CD4-positive, alpha-beta T cell (primary cell): ENCODE measurements at regions of chr19 and their contacts with region 1.

Region 1: DNA sequence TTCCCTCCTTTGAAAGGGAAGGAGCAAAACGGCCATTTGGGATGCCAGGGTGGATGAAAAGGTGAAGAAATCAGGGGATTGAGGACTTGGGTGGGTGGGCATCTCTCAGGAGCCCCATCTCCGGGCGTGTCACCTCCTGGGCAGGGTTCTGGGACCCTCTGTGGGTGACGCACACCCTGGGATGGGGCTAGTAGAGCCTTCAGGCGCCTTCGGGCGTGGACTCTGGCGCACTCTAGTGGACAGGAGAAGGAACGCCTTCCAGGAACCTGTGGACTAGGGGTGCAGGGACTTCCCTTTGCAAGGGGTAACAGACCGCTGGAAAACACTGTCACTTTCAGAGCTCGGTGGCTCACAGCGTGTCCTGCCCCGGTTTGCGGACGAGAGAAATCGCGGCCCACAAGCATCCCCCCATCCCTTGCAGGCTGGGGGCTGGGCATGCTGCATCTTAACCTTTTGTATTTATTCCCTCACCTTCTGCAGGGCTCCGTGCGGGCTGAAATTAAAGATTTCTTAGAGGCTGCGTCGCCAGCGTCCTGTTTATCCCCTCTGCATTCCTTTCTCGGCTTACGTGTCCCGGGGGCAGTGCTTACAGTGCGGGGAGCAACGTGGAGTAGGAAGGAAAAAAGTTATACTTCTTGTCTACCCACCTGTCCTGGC is 15.2 kb upstream of the S1PR4 start:
- DNase-seq: peak; percentile 60 to 87 (median 68)
- ATAC-seq: peak; percentile 94
- H3K4me3 ChIP-seq: no peak overlapping the region
- H3K4me3 Mint-ChIP-seq: no peak overlapping the region
- H3K27ac ChIP-seq: no peak overlapping the region
- H3K27ac Mint-ChIP-seq: peak overlapping the region; percentile 29
- H3K4me1 ChIP-seq: peaks cover 19% of the 10 kb centered on the region
- H3K4me1 Mint-ChIP-seq: peaks cover 13% of the 10 kb centered on the region
- H3K27me3 ChIP-seq: no peaks in the 10 kb centered on the region
- H3K27me3 Mint-ChIP-seq: no peaks in the 10 kb centered on the region
- CTCF ChIP-seq: peak; percentile 89

Region 2: DNA sequence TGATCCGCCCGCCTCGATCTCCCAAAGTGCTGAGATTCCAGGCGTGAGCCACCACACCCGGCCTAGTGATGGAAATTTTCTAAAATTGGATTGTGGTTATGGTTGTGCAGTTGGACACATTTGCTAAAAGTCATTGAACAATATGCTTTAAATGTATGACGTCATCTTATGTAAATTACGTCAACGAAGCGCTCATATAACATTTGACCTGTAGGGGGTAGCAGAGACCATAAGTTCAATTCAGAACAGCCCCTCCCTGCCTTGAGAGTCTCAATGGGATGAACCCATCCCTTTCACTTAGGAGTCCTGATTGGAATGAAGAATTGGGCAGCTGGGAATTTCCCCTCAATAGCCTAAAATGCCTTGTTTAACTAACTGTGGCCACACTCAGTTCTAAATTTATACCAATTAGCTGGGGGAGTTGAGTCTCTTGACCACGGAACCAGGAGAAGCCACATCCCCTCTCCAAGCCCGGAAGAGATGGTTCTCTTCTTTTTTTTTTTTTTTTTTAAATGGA is 201.3 kb before region 1 on chr19:
- CTCF ChIA-PET with region 1: no interaction called
- POLR2A ChIA-PET with region 1: interaction called, 3 read pairs
- intact Hi-C with region 1: loop called in 1 of 2 experiments (anchors 2 kb)
- DNase-seq: peak in 12 of 14 experiments; percentile 6 to 92 (median 40)
- ATAC-seq: peak; percentile 97
- H3K4me3 ChIP-seq: no peak overlapping the region
- H3K4me3 Mint-ChIP-seq: peak overlapping the region; percentile 8
- H3K27ac ChIP-seq: no peak overlapping the region
- H3K27ac Mint-ChIP-seq: peak overlapping the region; percentile 21
- H3K4me1 ChIP-seq: peaks cover 2% of the 10 kb centered on the region
- H3K4me1 Mint-ChIP-seq: peaks cover 7% of the 10 kb centered on the region
- H3K27me3 ChIP-seq: no peaks in the 10 kb centered on the region
- H3K27me3 Mint-ChIP-seq: peaks cover 4% of the 10 kb centered on the region
- CTCF ChIP-seq: peak; percentile 76

Region 3: DNA sequence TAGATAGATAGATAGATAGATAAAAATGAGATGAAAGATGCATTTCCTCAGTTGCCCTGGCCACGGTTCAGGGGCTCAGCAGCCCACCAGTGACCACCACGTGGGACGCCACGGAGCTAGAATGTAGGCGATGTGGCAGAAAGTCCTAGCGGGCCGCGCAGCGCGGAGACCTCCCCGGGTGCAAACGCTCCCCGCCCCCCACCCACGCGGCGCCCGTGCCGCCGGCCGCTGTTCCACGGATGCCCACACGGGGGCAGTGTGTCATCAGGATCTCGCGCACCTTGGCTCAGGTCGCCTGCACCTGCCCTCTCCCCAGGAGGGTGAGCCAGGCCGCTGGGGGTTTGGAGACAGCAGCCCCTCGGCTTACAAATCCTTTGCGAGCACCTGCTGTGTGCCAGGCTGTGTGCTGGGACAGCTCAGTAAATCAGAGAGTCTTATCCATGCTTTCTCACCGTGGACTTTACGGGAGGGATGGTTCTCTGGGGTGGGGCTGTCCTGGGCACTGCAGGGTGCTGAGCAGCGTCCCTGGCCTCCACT is 87.4 kb before region 1 on chr19:
- CTCF ChIA-PET with region 1: no interaction called
- POLR2A ChIA-PET with region 1: no interaction called
- intact Hi-C with region 1: loop called (anchors 5 to 10 kb)
- DNase-seq: peak; percentile 61 to 90 (median 76)
- ATAC-seq: peak; percentile 99
- H3K4me3 ChIP-seq: no peak overlapping the region
- H3K4me3 Mint-ChIP-seq: no peak overlapping the region
- H3K27ac ChIP-seq: no peak overlapping the region
- H3K27ac Mint-ChIP-seq: no peak overlapping the region
- H3K4me1 ChIP-seq: peaks cover 10% of the 10 kb centered on the region
- H3K4me1 Mint-ChIP-seq: peaks cover 3% of the 10 kb centered on the region
- H3K27me3 ChIP-seq: no peaks in the 10 kb centered on the region
- H3K27me3 Mint-ChIP-seq: no peaks in the 10 kb centered on the region
- CTCF ChIP-seq: peak; percentile 90

Region 4: DNA sequence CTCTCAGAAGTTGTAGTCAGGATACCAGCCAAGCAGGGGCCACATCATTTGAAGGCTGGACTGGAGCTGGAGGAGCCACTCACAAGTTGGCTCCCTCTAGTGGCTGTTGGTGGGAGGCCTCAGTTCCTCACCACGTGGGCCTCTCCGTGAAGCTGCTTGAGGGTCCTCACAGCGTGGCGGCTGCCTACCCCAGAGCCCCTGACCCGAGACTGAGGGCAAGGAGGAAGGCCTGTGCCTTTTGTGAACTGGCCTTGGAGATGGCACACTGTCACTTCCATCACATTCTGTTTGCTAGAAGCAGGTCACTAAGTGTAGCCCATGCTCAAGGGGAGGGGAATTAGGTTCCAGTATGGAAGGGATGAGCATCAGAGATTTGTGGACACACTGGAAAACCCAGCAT is 54.6 kb before region 1 on chr19:
- CTCF ChIA-PET with region 1: interaction called, 3 read pairs
- POLR2A ChIA-PET with region 1: no interaction called
- intact Hi-C with region 1: loop called in 1 of 2 experiments (anchors 2 kb)
- DNase-seq: peak; percentile 60 to 85 (median 67)
- ATAC-seq: peak; percentile 66
- H3K4me3 ChIP-seq: no peak overlapping the region
- H3K4me3 Mint-ChIP-seq: no peak overlapping the region
- H3K27ac ChIP-seq: no peak overlapping the region
- H3K27ac Mint-ChIP-seq: no peak overlapping the region
- H3K4me1 ChIP-seq: peaks cover 12% of the 10 kb centered on the region
- H3K4me1 Mint-ChIP-seq: peaks cover 10% of the 10 kb centered on the region
- H3K27me3 ChIP-seq: no peaks in the 10 kb centered on the region
- H3K27me3 Mint-ChIP-seq: peaks cover 3% of the 10 kb centered on the region
- CTCF ChIP-seq: peak; percentile 88

Region 5: GRCh38 chr19:3129112-3129511 is 34.2 kb before region 1 on chr19:
- CTCF ChIA-PET with region 1: interaction called, 10 read pairs
- POLR2A ChIA-PET with region 1: interaction called, 3 read pairs
- intact Hi-C with region 1: loop called (anchors 1 kb)
- DNase-seq: peak in 4 of 14 experiments; percentile 57 to 69 (median 64)
- ATAC-seq: no peak
- H3K4me3 ChIP-seq: no peak overlapping the region
- H3K4me3 Mint-ChIP-seq: no peak overlapping the region
- H3K27ac ChIP-seq: no peak overlapping the region
- H3K27ac Mint-ChIP-seq: no peak overlapping the region
- H3K4me1 ChIP-seq: peaks cover 31% of the 10 kb centered on the region
- H3K4me1 Mint-ChIP-seq: peaks cover 27% of the 10 kb centered on the region
- H3K27me3 ChIP-seq: no peaks in the 10 kb centered on the region
- H3K27me3 Mint-ChIP-seq: peaks cover 4% of the 10 kb centered on the region
- CTCF ChIP-seq: peak; percentile 71

Region 6: GRCh38 chr19:3146677-3147100 is 16.7 kb before region 1 on chr19:
- CTCF ChIA-PET with region 1: interaction called, 7 read pairs
- POLR2A ChIA-PET with region 1: no interaction called
- intact Hi-C with region 1: loop called (anchors 1 kb)
- DNase-seq: peak; percentile 43 to 81 (median 68)
- ATAC-seq: peak; percentile 75
- H3K4me3 ChIP-seq: no peak overlapping the region
- H3K4me3 Mint-ChIP-seq: no peak overlapping the region
- H3K27ac ChIP-seq: no peak overlapping the region
- H3K27ac Mint-ChIP-seq: no peak overlapping the region
- H3K4me1 ChIP-seq: peaks cover 20% of the 10 kb centered on the region
- H3K4me1 Mint-ChIP-seq: no peaks in the 10 kb centered on the region
- H3K27me3 ChIP-seq: no peaks in the 10 kb centered on the region
- H3K27me3 Mint-ChIP-seq: no peaks in the 10 kb centered on the region
- CTCF ChIP-seq: peak; percentile 84

Region 7: DNA sequence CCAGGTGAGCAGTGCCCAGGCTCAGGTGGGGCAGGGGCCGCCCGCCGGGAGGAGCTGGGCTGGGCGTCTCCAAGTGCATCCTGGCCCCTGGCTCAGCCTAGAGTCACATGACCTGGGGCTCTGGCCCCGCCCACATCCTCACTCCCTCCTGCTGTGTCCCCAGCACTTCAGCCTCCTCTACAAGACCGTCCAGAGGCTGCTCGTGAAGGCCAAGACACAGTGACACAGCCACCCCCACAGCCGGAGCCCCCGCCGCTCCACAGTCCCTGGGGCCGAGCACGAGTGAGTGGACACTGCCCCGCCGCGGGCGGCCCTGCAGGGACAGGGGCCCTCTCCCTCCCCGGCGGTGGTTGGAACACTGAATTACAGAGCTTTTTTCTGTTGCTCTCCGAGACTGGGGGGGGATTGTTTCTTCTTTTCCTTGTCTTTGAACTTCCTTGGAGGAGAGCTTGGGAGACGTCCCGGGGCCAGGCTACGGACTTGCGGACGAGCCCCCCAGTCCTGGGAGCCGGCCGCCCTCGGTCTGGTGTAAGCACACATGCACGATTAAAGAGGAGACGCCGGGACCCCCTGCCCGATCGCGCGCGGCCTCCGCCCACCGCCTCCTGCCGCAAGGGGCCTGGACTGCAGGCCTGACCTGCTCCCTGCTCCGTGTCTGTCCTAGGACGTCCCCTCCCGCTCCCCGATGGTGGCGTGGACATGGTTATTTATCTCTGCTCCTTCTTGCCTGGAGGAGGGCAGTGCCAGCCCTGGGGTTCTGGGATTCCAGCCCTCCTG is 44.3 kb after region 1 on chr19:
- CTCF ChIA-PET with region 1: no interaction called
- POLR2A ChIA-PET with region 1: no interaction called
- intact Hi-C with region 1: no loop called
- DNase-seq: no peak
- ATAC-seq: no peak
- H3K4me3 ChIP-seq: no peak overlapping the region
- H3K4me3 Mint-ChIP-seq: no peak overlapping the region
- H3K27ac ChIP-seq: no peak overlapping the region
- H3K27ac Mint-ChIP-seq: no peak overlapping the region
- H3K4me1 ChIP-seq: peaks cover 6% of the 10 kb centered on the region
- H3K4me1 Mint-ChIP-seq: no peaks in the 10 kb centered on the region
- H3K27me3 ChIP-seq: no peaks in the 10 kb centered on the region
- H3K27me3 Mint-ChIP-seq: no peaks in the 10 kb centered on the region
- CTCF ChIP-seq: no peak

Region 8: DNA sequence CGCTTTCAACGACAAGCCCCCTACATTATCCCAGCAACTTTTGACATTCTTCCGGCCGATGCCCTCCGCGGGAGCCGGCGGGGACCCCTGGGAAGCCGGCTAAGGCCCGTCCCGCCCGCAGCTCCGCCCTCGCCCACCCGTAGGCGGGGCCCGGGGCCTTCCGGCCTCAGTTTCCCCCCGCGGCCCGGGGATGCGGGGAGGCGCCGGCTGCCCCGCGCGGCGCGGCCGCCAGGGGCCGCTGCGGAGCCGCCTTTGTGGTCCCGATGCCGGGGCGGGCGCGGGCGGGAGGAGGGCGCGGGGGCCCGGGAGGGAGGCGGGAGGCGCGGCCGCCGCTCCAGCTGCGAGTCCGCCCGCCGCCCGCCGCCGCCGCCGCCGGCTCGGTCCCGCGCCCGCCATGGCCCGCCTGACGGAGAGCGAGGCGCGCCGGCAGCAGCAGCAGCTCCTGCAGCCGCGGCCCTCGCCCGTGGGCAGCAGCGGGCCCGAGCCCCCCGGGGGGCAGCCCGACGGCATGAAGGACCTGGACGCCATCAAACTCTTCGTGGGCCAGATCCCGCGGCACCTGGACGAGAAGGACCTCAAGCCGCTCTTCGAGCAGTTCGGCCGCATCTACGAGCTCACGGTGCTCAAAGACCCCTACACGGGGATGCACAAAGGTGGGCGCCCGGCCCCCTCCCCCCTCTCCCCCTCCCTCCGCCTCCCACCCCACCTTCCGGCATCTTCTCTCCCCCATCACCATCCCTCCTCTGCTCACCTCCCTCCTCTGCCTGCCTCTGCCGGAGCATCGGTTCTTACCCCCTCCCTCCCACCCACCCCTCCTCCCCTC is 61.2 kb after region 1 on chr19 and contains the start of gene CELF5:
- CTCF ChIA-PET with region 1: no interaction called
- POLR2A ChIA-PET with region 1: no interaction called
- intact Hi-C with region 1: no loop called
- DNase-seq: peak; percentile 34 to 83 (median 54)
- ATAC-seq: peak; percentile 82
- H3K4me3 ChIP-seq: no peak within 1 kb of the TSS
- H3K4me3 Mint-ChIP-seq: no peak within 1 kb of the TSS
- H3K27ac ChIP-seq: no peak within 1 kb of the TSS
- H3K27ac Mint-ChIP-seq: no peak within 1 kb of the TSS
- H3K4me1 ChIP-seq: peaks cover 8% of the 10 kb centered on the region
- H3K4me1 Mint-ChIP-seq: no peaks in the 10 kb centered on the region
- H3K27me3 ChIP-seq: peaks cover 34 to 38% of the 10 kb centered on the region in 2 experiments
- H3K27me3 Mint-ChIP-seq: peaks cover 29% of the 10 kb centered on the region
- CTCF ChIP-seq: no peak
- total RNA-seq, gene CELF5: 0.36 TPM